ENCODE measurements at regions of chr15 and their contacts with region 1.

Region 1: GRCh38 chr15:23035964-23036566 is 3.3 kb downstream of the TUBGCP5 start:
- DNase-seq: no peak
- H3K4me3 ChIP-seq: no peak overlapping the region
- CTCF ChIP-seq: peak; percentile 65

Region 2: DNA sequence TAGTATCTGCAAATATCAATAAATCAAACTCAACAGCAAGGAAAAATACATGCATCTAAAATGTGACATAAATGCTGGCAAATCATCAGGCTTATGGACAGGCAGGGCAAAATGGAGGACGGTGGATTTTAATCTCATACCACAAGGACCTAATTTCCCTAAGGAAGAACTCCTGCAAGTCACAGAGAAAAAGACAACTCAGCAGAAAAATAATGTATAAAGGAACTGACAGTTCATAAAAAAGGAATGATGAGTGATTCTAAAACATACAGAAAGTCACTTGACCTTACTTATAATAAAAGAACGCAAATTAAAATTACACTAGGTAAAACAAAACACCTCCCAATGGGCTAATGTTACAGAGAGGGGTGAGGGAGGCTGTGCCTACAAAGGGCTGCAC is 13.9 kb before region 1 on chr15:
- CTCF ChIA-PET with region 1: interaction called, 40 read pairs
- POLR2A ChIA-PET with region 1: no interaction called
- DNase-seq: no peak
- H3K4me3 ChIP-seq: no peak overlapping the region
- CTCF ChIP-seq: no peak

Region 3: GRCh38 chr15:23064156-23064555 is 28.1 kb after region 1 on chr15:
- CTCF ChIA-PET with region 1: no interaction called
- POLR2A ChIA-PET with region 1: no interaction called
- DNase-seq: no peak
- H3K4me3 ChIP-seq: no peak overlapping the region
- CTCF ChIP-seq: no peak

Measured in AG04449 (cell line).